ENCODE measurements at regions of chr2 and their contacts with region 1.

Region 1: DNA sequence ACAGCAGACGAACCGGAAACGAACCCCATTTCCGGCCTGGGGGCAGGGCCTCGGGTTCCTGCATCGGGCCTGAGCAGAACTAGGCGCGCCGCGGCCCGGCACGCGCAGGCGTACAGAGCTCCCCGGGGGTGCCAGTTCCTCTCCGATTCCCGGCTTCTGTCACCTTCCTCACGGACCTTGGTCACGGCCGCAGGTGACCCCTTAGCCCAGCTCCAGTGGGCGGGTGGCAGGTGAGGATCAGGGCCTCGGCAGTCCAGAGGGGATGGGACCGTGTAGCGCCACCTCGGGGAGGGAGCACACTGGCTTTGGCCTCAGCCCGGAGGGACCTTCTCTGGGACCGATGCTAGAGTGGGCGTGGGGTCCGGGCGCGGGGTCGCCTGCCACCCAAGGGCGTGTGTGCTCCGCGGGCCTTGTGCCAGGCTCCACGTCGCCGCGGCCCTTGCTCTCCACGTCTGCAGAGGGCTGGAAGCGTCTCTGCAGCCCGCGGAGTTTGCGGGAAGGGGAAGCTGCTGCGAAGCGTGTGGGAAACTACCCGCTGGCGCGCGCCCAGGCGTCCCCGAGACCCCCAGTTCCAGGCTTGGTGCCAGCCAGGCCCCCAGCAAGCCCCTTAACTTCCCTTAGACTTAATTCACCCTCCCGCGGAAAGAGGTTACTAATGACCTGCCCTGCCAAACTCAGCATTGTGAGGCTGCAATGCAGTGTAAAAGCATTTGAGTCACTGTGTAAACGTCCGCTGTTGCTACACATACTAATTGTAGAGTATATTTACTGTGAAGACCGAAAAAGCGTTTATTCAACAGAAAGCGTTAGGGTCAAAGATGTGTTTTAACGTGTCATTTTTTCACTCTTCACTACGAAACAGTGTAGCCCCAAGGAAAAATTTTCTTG is at the start of gene TRAPPC12:
- DNase-seq: peak; percentile 94
- ATAC-seq: peak; percentile 77
- H3K4me3 ChIP-seq: peak within 1 kb of the TSS; percentile 75 to 88 (median 84)
- H3K4me3 Mint-ChIP-seq: peak within 1 kb of the TSS; percentile 98
- H3K27ac ChIP-seq: peak within 1 kb of the TSS; percentile 90
- H3K27ac Mint-ChIP-seq: peak within 1 kb of the TSS; percentile 96
- H3K4me1 ChIP-seq: peaks cover 32 to 37% of the 10 kb centered on the region in 2 donors
- H3K4me1 Mint-ChIP-seq: peaks cover 43% of the 10 kb centered on the region
- H3K27me3 ChIP-seq: no peaks in the 10 kb centered on the region
- H3K27me3 Mint-ChIP-seq: no peaks in the 10 kb centered on the region
- CTCF ChIP-seq: peak; percentile 60
- total RNA-seq, gene TRAPPC12: 151 and 154 TPM in 2 replicates

Region 2: GRCh38 chr2:2613279-2614199 is 766.4 kb before region 1 on chr2:
- CTCF ChIA-PET with region 1: no interaction called
- POLR2A ChIA-PET with region 1: no interaction called
- intact Hi-C with region 1: loop called (anchors 5 kb)
- DNase-seq: peak; percentile 79
- ATAC-seq: peak; percentile 97
- H3K4me3 ChIP-seq: peak overlapping the region; percentile 16 to 57 (median 43)
- H3K4me3 Mint-ChIP-seq: peak overlapping the region; percentile 81
- H3K27ac ChIP-seq: peak overlapping the region in 1 of 2 donors; percentile 52
- H3K27ac Mint-ChIP-seq: peak overlapping the region; percentile 62
- H3K4me1 ChIP-seq: peaks cover 0 to 10% of the 10 kb centered on the region in 2 donors
- H3K4me1 Mint-ChIP-seq: peaks cover 8% of the 10 kb centered on the region
- H3K27me3 ChIP-seq: peaks cover 0 to 11% (median 2%) of the 10 kb centered on the region in 4 experiments
- H3K27me3 Mint-ChIP-seq: peaks cover 18% of the 10 kb centered on the region
- CTCF ChIP-seq: no peak

Region 3: GRCh38 chr2:3461801-3462492 is 82.1 kb after region 1 on chr2:
- CTCF ChIA-PET with region 1: no interaction called
- POLR2A ChIA-PET with region 1: no interaction called
- intact Hi-C with region 1: loop called (anchors 5 kb)
- DNase-seq: peak; percentile 76
- ATAC-seq: peak; percentile 83
- H3K4me3 ChIP-seq: peak overlapping the region in 2 of 5 experiments; percentile 13 to 28
- H3K4me3 Mint-ChIP-seq: peak overlapping the region; percentile 67
- H3K27ac ChIP-seq: peak overlapping the region; percentile 48 to 81
- H3K27ac Mint-ChIP-seq: peak overlapping the region; percentile 93
- H3K4me1 ChIP-seq: peaks cover 6 to 11% of the 10 kb centered on the region in 2 donors
- H3K4me1 Mint-ChIP-seq: peaks cover 16% of the 10 kb centered on the region
- H3K27me3 ChIP-seq: no peaks in the 10 kb centered on the region
- H3K27me3 Mint-ChIP-seq: no peaks in the 10 kb centered on the region
- CTCF ChIP-seq: peak; percentile 99

Region 4: DNA sequence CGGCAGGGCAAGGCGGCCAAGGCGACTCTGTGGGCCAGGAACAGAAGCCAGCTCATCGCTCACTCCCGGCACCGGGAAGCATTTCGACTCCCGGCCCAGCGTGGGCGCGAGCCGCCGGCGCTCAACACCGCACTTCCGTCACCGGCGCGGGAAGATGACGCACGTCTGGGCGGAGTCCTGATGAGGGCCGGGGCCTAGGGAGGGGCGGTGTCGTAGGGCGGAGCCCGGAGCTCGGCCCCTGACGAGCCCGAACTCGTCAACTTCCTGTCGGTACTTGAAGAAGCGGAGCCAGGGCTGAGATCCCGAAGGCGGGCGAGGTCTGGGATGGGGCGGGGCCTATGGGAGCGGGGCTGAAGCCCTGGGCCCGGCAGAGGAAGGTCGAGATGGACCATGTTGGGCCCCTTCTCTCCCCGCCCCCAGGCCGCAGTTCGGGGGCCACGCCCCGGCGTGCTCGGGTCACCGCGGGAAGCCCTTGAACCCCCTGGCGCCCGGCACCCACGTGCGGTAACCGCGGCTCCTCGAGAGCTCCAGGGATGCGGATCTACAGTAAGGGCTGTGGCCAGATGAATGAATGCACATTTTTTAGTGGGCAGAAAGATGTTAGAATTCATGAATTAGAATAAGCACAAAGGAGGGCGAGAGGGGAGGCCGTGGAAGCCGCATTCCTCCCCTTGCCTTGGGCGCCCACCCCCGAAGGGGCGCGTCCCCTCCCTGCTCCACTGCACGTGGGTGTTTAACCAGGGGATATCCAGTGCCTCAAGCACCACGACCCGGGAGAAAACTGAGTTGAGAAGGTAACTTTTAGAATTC is 178.5 kb after region 1 on chr2 and contains the start of gene RNASEH1:
- CTCF ChIA-PET with region 1: interaction called, 4 read pairs
- POLR2A ChIA-PET with region 1: interaction called, 12 read pairs
- intact Hi-C with region 1: loop called (anchors 1 kb)
- DNase-seq: peak; percentile 98
- ATAC-seq: peak; percentile 96
- H3K4me3 ChIP-seq: peak within 1 kb of the TSS; percentile 69 to 87 (median 86)
- H3K4me3 Mint-ChIP-seq: peak within 1 kb of the TSS; percentile 95
- H3K27ac ChIP-seq: peak within 1 kb of the TSS; percentile 88 to 94
- H3K27ac Mint-ChIP-seq: peak within 1 kb of the TSS; percentile 98
- H3K4me1 ChIP-seq: peaks cover 21 to 35% of the 10 kb centered on the region in 2 donors
- H3K4me1 Mint-ChIP-seq: peaks cover 49% of the 10 kb centered on the region
- H3K27me3 ChIP-seq: no peaks in the 10 kb centered on the region
- H3K27me3 Mint-ChIP-seq: no peaks in the 10 kb centered on the region
- CTCF ChIP-seq: no peak
- total RNA-seq, gene RNASEH1: 24.2 and 25.1 TPM in 2 replicates

Region 5: DNA sequence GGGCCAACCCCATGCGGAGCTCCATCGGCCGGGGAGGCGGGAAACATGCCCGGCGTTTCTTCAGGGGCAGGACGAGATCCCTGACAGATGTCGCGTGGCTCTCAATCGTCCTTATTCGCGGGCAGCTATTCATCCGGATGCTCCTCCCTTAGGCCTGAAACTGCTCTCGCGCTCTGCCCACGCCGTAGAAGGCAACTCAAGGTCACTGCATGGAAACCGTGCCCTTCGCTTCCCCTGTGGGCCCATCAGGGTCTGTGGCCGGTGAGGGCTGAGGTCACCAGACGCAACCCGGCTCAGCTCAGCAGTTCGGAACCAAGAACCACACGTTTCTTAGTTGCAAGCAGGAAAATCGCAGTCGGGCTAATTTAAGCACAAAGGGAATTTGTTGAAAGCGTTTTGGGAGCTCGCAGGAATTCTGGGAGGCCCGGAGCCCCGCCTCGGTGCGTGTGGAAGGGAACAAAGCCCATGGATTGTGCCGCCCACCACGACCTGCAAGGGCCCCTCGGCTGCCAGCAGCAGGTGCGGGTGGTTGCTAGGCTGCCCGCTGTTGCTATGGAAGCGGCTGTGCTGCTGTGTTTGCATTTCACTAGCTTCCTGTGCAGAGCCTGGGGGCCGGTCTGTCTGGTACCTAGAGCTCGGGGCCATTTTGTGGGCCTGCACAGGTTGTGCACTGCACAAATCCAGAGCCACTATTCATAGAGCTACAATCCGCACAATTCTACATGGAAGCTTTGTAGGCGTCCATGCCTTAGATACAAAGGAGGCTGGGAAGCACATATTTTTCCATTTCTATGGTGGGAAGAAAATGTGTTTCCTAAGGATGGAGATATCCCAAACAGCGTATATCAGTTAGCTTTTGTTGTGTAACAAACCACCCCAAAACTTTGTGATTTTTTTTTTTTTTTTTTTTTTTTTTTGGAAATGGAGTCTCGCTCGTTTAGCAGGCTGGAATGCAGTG is 272.1 kb after region 1 on chr2:
- CTCF ChIA-PET with region 1: no interaction called
- POLR2A ChIA-PET with region 1: no interaction called
- intact Hi-C with region 1: loop called (anchors 2 kb)
- DNase-seq: peak; percentile 70
- ATAC-seq: peak; percentile 70
- H3K4me3 ChIP-seq: peak overlapping the region; percentile 16 to 66 (median 46)
- H3K4me3 Mint-ChIP-seq: peak overlapping the region; percentile 93
- H3K27ac ChIP-seq: peak overlapping the region; percentile 53 to 54
- H3K27ac Mint-ChIP-seq: peak overlapping the region; percentile 86
- H3K4me1 ChIP-seq: peaks cover 14 to 15% of the 10 kb centered on the region in 2 donors
- H3K4me1 Mint-ChIP-seq: peaks cover 16% of the 10 kb centered on the region
- H3K27me3 ChIP-seq: peaks cover 0 to 16% (median 1%) of the 10 kb centered on the region in 4 experiments
- H3K27me3 Mint-ChIP-seq: no peaks in the 10 kb centered on the region
- CTCF ChIP-seq: no peak

Region 6: GRCh38 chr2:4090700-4091630 is 711.1 kb after region 1 on chr2:
- CTCF ChIA-PET with region 1: no interaction called
- POLR2A ChIA-PET with region 1: no interaction called
- intact Hi-C with region 1: no loop called
- DNase-seq: no peak
- ATAC-seq: no peak
- H3K4me3 ChIP-seq: no peak overlapping the region
- H3K4me3 Mint-ChIP-seq: no peak overlapping the region
- H3K27ac ChIP-seq: no peak overlapping the region
- H3K27ac Mint-ChIP-seq: no peak overlapping the region
- H3K4me1 ChIP-seq: no peaks in the 10 kb centered on the region
- H3K4me1 Mint-ChIP-seq: no peaks in the 10 kb centered on the region
- H3K27me3 ChIP-seq: no peaks in the 10 kb centered on the region
- H3K27me3 Mint-ChIP-seq: no peaks in the 10 kb centered on the region
- CTCF ChIP-seq: no peak